ENCODE measurements at regions of chr12 and their contacts with region 1.

Region 1: DNA sequence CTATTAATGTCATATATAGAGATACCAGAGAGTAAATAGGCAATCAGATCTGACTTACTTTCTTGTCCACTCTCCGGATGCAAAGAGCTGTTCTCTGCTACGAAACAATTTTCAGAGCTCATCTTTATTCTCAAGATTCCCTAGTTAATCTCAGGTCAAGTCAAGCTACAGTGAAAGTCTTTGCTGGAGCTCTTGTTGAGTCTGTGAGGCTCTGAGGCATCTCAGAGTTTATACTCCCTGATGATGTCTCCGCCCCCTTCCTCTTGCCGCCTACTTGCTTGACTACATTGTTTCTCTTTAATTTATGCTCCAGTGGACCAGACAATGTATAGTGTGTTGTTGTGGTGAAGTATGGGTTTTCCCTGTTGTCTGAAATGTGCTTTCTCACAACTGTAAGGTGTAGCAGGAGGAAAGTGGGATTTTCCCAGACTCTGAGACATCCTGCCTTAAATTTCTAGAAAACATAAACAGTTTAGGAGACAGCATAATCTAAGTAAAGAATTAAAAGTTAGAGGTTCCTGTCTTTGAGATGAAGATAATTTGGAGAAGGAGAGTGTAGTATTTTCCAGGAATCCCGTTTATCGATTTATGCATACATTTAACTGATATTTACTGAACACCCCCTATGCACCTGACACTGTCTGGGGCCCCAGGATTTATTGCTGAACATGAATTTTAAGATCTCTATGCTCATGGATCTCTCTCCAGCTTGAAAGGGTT is at the start of gene CD69:
- DNase-seq: peak; percentile 82 to 95 (median 93)
- H3K4me3 ChIP-seq: peak within 1 kb of the TSS in 6 of 7 experiments; percentile 70 to 100 (median 94)
- H3K27ac ChIP-seq: peak within 1 kb of the TSS; percentile 86 to 95
- H3K4me1 ChIP-seq: peaks cover 43 to 68% (median 61%) of the 10 kb centered on the region in 4 experiments
- H3K27me3 ChIP-seq: no peaks in the 10 kb centered on the region

Region 2: DNA sequence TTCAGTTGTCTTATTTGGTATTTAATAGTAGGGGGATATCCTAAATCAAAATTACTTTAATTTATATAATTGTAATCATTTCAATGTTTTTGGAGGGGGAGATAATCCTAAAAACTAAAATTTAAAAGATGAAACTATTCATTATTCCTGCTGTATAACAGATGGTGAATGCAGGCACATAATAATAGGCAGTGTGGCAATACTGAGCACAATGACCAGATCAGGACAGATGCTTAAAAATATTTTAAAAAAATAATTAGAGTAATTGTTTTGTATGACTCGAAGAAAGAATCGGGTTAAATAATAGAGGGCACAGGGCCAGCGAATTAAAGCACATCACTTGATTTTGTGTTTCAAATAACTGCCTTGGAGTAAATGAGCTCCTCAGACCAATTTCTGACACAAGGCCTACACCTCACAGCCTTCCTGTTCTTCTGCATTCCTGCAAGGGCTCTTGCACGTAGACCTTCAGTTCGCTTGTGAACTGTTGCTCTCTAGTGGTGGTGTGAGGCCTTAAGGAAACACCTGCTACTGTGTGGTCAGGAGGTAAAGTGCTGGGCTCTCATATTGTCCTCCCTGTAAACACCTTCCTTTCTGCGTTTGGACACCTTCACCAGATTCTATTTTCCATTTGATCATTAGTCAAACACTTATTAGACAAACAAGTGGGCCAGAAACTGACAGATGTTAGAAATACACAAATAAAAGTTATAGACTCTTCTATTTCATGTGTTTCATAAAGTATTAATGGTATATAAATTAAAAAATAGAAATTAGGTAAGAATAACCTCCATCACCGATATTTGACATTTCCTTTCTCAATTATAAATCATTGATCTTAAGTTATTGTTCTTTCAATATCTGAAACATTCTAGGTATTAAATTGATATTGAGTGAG is 37.1 kb after region 1 on chr12:
- CTCF ChIA-PET with region 1: interaction called, 437 read pairs
- POLR2A ChIA-PET with region 1: interaction called, 22 read pairs
- DNase-seq: peak; percentile 91 to 96 (median 93)
- H3K4me3 ChIP-seq: no peak overlapping the region
- H3K27ac ChIP-seq: peak overlapping the region in 1 of 2 experiments; percentile 27
- H3K4me1 ChIP-seq: peaks cover 29 to 59% (median 47%) of the 10 kb centered on the region in 4 experiments
- H3K27me3 ChIP-seq: no peaks in the 10 kb centered on the region